ENCODE measurements at regions of chr2 and their contacts with region 1.

Region 1: GRCh38 chr2:174341286-174341994 is 6.7 kb downstream of the SP9 start:
- DNase-seq: peak; percentile 72 to 94
- H3K4me3 ChIP-seq: peak overlapping the region; percentile 31; the same call in 1 of the 2 replicates
- H3K27ac ChIP-seq: no peak overlapping the region
- H3K4me1 ChIP-seq: peaks cover 4% of the 10 kb centered on the region; the same call in 1 of the 2 replicates
- H3K27me3 ChIP-seq: no peaks in the 10 kb centered on the region
- CTCF ChIP-seq: peak; percentile 100

Region 2: DNA sequence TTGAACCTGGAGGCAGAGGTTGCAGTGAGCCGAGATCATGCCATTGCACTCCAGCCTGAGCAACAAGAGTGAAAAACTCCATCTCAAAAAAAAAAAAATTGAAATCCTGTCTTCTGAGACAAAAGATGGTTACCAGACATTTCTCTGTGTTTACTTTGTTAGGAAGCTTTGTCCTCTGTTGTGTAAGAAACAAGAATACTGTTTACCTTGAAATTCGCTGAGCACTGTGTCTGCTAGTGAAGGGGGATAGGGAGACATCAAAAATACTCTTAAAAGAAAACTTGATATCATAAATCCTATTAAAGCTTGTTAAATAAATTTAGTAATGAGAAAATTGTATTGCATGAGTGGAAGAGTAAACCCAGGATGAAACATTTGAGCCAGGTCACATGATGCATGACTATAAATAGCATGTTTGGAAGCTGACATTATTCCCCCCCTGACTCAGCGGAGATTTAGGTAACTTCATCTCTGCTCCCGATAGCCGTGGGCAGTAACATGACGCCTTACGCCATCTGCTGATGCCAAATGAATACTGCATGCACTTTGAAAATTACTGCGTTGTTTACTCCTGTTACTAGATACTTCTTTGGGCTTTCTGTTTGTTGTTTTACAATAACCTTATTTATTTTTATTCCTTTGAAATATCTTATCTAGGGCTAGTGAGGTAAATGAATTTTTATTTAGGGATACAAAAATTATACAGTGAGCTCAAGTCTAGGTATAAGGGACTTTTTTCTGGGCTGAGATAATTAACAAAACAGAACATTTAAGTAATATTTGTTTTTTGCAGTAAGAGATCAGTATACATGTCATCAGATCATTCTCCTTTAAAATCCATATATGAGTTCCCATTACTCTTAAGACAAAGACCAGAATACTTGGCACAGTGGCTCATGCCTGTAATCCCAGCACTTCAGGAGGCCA is 1130.9 kb before region 1 on chr2:
- CTCF ChIA-PET with region 1: no interaction called
- POLR2A ChIA-PET with region 1: no interaction called
- intact Hi-C with region 1: loop called (anchors 10 kb)
- DNase-seq: peak; percentile 70 to 85
- H3K4me3 ChIP-seq: no peak overlapping the region
- H3K27ac ChIP-seq: peak overlapping the region; percentile 39
- H3K4me1 ChIP-seq: peaks cover 13% of the 10 kb centered on the region
- H3K27me3 ChIP-seq: no peaks in the 10 kb centered on the region
- CTCF ChIP-seq: peak; percentile 99

Region 3: DNA sequence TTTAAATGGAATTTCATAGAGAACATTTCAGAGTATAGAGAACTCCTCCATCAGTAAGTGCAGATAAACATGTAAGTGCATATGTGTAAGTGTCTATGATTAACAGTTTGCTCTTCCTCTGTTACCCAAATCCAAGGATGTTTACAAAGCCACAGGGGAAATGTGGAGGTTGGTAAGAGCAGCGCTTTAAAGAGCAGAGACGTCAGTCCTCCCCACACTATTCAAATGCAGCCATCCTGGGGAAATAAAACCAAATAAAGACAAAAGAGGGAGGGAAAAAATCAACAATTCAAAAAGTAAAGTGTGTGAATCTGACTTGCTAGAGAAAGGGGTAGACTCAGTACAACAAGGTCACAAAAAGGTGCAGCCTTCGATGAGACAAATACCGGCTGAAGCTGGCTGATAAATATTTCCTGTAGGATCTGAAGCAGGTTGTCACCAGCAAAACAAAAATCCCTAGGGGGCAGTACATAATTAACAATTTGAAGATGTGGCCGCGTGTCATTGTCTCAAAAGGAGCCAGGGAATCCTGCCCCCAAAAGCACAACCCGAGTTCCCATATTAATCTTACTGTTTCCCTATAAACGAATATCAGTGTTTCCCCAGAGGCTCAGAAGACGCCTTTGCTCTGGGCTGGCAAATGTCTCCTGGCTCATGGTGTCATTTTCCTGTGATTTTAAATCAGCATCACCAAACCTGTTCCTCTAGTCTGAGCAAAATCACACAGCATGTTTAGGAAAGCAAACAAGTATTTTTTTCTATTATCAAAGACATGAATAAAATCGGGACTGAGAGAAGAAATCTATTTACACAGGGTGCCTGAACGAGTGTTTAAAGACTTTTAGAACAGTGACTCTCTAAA is 770.2 kb before region 1 on chr2:
- CTCF ChIA-PET with region 1: interaction called, 11 read pairs
- POLR2A ChIA-PET with region 1: no interaction called
- intact Hi-C with region 1: loop called (anchors 1 kb)
- DNase-seq: peak; percentile 59 to 87
- H3K4me3 ChIP-seq: peak overlapping the region; percentile 22; the same call in 1 of the 2 replicates
- H3K27ac ChIP-seq: peak overlapping the region; percentile 58
- H3K4me1 ChIP-seq: peaks cover 30% of the 10 kb centered on the region
- H3K27me3 ChIP-seq: peaks cover 5% of the 10 kb centered on the region; the same call in 1 of the 2 replicates
- CTCF ChIP-seq: peak; percentile 75

Region 4: DNA sequence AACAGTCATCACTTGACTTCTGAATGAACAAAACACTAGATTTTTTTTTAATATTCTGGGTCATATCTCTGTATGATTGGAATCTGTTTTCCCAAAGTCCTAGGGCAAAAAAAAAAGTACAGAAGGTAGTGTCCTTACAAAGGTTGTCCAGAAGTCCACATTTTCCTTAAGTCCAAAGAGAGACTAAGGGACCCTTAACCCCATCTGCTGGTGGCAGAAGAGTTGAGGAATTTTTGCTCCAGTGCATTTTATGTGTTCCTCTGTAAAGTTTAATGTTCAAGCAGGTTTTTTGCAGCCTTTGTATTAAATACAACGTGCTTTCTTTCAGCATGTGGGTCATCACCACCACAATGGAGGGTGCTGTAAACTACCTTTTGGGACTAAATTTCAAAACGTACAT is 592.1 kb before region 1 on chr2:
- CTCF ChIA-PET with region 1: interaction called, 10 read pairs
- POLR2A ChIA-PET with region 1: no interaction called
- intact Hi-C with region 1: loop called (anchors 1 kb)
- DNase-seq: no peak
- H3K4me3 ChIP-seq: no peak overlapping the region
- H3K27ac ChIP-seq: no peak overlapping the region
- H3K4me1 ChIP-seq: no peaks in the 10 kb centered on the region
- H3K27me3 ChIP-seq: peaks cover 29% of the 10 kb centered on the region; the same call in 1 of the 2 replicates
- CTCF ChIP-seq: peak; percentile 65

Region 5: DNA sequence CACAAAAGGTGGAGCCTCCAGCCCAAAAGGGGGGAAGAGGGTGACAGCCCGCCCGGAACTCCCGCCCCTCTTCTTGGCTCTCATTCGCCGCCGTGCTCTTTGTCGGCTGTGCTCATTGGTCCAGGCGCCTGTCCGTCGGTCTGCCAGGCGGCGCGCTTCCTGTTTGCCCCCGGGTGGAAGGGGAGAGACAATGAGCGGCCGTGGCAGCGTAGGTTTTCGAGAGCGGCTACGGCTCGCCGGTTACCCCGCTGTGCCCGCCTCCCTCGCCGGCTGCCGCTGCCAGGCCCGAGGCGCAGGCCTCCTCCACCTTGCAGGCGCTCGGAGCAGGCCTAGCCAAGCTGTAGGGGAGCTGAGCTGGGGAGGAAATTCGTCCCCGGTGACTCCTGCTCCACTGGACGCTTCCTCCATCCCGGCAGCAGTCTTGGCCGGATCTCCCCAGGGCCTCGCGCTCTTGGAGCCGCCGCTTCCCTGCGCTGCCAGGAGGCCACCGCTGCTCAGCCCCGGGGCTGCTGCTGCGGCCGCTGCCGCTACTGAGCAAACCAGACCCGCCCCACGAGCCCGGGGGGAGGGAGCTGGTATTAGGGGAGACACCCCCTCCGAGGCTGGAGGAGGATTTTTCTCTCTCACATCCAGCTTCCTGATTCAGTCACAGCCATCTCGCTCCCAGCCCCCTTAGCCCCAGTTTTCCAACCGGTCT is 376.0 kb before region 1 on chr2 and contains the start of gene SP3:
- CTCF ChIA-PET with region 1: no interaction called
- POLR2A ChIA-PET with region 1: no interaction called
- intact Hi-C with region 1: loop called (anchors 2 kb)
- DNase-seq: peak; percentile 97 to 99
- H3K4me3 ChIP-seq: peak within 1 kb of the TSS; percentile 70
- H3K27ac ChIP-seq: peak within 1 kb of the TSS; percentile 85
- H3K4me1 ChIP-seq: peaks cover 43% of the 10 kb centered on the region
- H3K27me3 ChIP-seq: no peaks in the 10 kb centered on the region
- CTCF ChIP-seq: no peak
- total RNA-seq, gene SP3: 93.6 and 127 TPM in 2 replicates

Region 6: DNA sequence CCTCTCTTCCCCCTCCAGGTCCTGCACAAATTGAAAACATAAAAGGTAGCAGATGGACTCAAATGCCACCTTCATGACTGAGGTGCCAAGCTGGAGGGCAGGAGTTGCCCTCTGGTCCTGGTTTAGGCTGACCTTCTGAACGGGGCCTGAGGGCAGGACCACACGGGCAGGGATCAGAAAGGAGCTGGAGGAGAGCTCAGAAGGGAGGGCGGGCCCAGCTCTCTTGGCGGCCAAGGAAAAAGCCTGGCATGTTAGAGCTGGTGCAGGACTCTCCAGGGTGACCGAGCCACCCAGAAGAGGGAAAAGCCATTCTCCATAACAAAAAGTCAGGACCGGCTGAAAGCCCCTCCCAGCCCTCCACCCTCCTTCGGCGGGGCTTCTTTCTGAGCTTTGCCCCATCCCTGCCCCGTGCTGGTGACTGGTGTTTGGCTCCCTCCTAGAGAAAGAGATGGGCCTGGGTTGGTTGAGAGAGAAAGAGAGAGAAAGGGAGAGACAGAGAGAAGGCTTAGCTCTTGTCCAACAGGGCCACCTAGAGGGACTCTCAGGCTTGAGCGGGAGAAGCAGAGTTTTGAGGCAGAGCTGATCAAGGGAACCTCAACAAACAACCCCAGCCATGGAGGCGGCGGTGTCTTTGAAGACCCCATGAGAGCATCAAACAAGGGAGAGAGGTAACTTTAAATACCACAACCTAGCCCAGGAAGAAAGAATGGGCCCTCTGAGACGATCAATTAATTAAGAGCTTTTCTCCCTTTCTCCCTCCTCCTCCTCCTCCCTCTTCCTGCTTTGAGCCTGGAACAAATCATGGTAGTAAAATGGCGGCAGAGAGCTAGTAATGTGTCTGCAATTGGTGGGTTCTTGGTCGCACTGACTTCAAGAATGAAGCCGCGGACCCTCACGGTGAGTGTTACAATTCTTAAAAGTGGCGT is 205.4 kb after region 1 on chr2:
- CTCF ChIA-PET with region 1: interaction called, 20 read pairs
- POLR2A ChIA-PET with region 1: interaction called, 4 read pairs
- intact Hi-C with region 1: loop called (anchors 2 kb)
- DNase-seq: peak; percentile 74 to 79
- H3K4me3 ChIP-seq: peak overlapping the region; percentile 58
- H3K27ac ChIP-seq: no peak overlapping the region
- H3K4me1 ChIP-seq: 0 out of 2 replicates have a peak, but pooled peaks cover 4% of the 10 kb centered on the region
- H3K27me3 ChIP-seq: 0 out of 2 replicates have a peak, but pooled peaks cover 5% of the 10 kb centered on the region
- CTCF ChIP-seq: peak; percentile 80

Measured in PC-9 (cell line).